ENCODE measurements at regions of chr16 and their contacts with region 1.

Region 1: GRCh38 chr16:11586856-11587642 is at the start of gene LITAF:
- DNase-seq: peak; percentile 50 to 65 (median 57)
- H3K4me3 ChIP-seq: peak within 1 kb of the TSS; percentile 78 to 82
- H3K4me3 Mint-ChIP-seq: peak within 1 kb of the TSS; percentile 90 to 97 (median 96)
- H3K27ac ChIP-seq: peak within 1 kb of the TSS; percentile 73
- H3K27ac Mint-ChIP-seq: peak within 1 kb of the TSS; percentile 89 to 98 (median 95)
- H3K4me1 ChIP-seq: peaks cover 47% of the 10 kb centered on the region
- H3K4me1 Mint-ChIP-seq: peaks cover 27 to 52% (median 41%) of the 10 kb centered on the region in 4 donors
- H3K27me3 ChIP-seq: no peaks in the 10 kb centered on the region
- H3K27me3 Mint-ChIP-seq: no peaks in the 10 kb centered on the region
- total RNA-seq, gene LITAF: 155 to 157 TPM

Region 2: DNA sequence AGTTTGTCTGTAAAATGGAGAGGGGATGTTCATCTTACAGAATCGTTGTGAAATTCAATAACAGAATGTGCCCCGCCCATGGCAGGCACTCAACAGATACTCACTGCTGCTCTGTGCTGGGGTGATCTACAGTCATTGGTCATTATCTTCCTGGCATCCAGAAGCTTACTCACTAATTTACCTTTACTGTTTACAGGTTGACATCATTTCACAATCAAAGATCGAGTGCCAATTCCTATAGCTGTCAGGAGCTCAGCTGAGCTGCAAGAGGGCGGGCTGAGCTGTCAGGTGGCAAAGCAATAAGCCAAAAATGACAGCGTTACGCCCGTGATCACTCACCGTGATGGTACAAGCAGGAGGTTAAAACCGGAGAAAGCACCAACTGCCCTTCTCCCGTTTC is 51.6 kb before region 1 on chr16:
- CTCF ChIA-PET with region 1: interaction called, 20 read pairs
- POLR2A ChIA-PET with region 1: interaction called, 7 read pairs
- intact Hi-C with region 1: loop called (anchors 1 kb)
- DNase-seq: no peak
- H3K4me3 ChIP-seq: no peak overlapping the region
- H3K4me3 Mint-ChIP-seq: no peak overlapping the region
- H3K27ac ChIP-seq: no peak overlapping the region
- H3K27ac Mint-ChIP-seq: no peak overlapping the region
- H3K4me1 ChIP-seq: no peaks in the 10 kb centered on the region
- H3K4me1 Mint-ChIP-seq: peaks cover 5 to 11% (median 10%) of the 10 kb centered on the region in 4 donors
- H3K27me3 ChIP-seq: no peaks in the 10 kb centered on the region
- H3K27me3 Mint-ChIP-seq: no peaks in the 10 kb centered on the region

Region 3: GRCh38 chr16:11576427-11577289 is 10.4 kb before region 1 on chr16:
- CTCF ChIA-PET with region 1: no interaction called
- POLR2A ChIA-PET with region 1: interaction called, 18 read pairs
- intact Hi-C with region 1: loop called (anchors 1 kb)
- DNase-seq: no peak
- H3K4me3 ChIP-seq: no peak overlapping the region
- H3K4me3 Mint-ChIP-seq: peak overlapping the region in 7 of 8 donors; percentile 0 to 62 (median 39)
- H3K27ac ChIP-seq: no peak overlapping the region
- H3K27ac Mint-ChIP-seq: peak overlapping the region; percentile 25 to 90 (median 77)
- H3K4me1 ChIP-seq: peaks cover 90% of the 10 kb centered on the region
- H3K4me1 Mint-ChIP-seq: peaks cover 49 to 86% (median 66%) of the 10 kb centered on the region in 4 donors
- H3K27me3 ChIP-seq: no peaks in the 10 kb centered on the region
- H3K27me3 Mint-ChIP-seq: no peaks in the 10 kb centered on the region

Region 4: DNA sequence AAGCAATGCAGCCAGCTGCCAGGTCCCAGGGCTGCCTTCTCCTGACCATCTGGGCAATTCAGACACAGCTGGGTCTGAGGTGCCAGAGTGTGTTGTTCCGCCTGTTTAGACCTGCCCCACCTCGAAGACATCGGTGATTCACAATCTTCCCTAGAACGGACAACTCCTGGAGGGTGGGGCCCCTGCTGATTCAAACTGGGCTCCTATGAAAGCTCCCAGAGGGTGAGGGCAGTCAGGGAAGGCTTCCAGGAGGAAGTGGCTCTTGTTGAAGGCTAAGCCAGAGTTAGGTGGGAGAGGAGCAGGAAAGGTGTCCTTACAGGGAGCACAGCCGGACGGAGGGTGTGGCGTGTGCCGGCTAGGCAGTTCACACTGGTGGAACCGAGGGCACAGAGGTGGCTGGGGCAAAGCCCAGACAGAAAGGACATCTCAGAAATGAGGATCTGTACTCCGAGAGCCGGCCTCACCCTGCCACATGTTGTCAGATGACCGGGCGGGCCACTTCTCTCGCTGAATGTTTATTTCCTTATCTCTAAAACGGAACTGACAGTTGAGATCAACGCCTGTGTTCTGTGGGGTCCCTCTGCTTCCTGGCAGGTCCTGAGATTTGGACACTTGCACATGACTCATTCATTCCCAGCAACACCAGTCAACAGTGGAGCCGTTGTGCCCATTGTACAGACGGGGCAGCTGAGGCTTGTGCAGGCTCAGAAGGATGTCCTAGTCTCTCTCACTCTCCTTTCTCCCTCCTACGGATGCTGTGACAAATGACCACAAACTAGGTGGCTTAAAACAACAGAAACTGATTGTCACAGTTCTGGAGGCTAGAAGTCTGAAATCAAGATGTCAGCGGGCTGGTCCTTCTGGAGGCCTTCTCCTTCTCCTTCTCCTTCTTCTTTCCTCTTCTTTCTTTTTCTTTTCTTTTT is 26.6 kb after region 1 on chr16:
- CTCF ChIA-PET with region 1: interaction called, 4 read pairs
- POLR2A ChIA-PET with region 1: interaction called, 175 read pairs
- intact Hi-C with region 1: no loop called
- DNase-seq: no peak
- H3K4me3 ChIP-seq: no peak overlapping the region
- H3K4me3 Mint-ChIP-seq: peak overlapping the region in 6 of 8 donors; percentile 7 to 61 (median 20)
- H3K27ac ChIP-seq: no peak overlapping the region
- H3K27ac Mint-ChIP-seq: peak overlapping the region in 6 of 7 donors; percentile 22 to 81 (median 74)
- H3K4me1 ChIP-seq: peaks cover 24% of the 10 kb centered on the region
- H3K4me1 Mint-ChIP-seq: peaks cover 12 to 32% (median 22%) of the 10 kb centered on the region in 4 donors
- H3K27me3 ChIP-seq: no peaks in the 10 kb centered on the region
- H3K27me3 Mint-ChIP-seq: no peaks in the 10 kb centered on the region

Region 5: GRCh38 chr16:11667824-11668622 is 81.0 kb after region 1 on chr16 and contains the start of gene SNN:
- CTCF ChIA-PET with region 1: interaction called, 3 read pairs
- POLR2A ChIA-PET with region 1: interaction called, 10 read pairs
- intact Hi-C with region 1: no loop called
- DNase-seq: peak; percentile 81 to 85 (median 83)
- H3K4me3 ChIP-seq: peak within 1 kb of the TSS; percentile 47 to 72
- H3K4me3 Mint-ChIP-seq: peak within 1 kb of the TSS; percentile 84 to 92 (median 87)
- H3K27ac ChIP-seq: peak within 1 kb of the TSS; percentile 47
- H3K27ac Mint-ChIP-seq: peak within 1 kb of the TSS; percentile 65 to 95 (median 87)
- H3K4me1 ChIP-seq: peaks cover 74% of the 10 kb centered on the region
- H3K4me1 Mint-ChIP-seq: peaks cover 51 to 80% (median 60%) of the 10 kb centered on the region in 4 donors
- H3K27me3 ChIP-seq: no peaks in the 10 kb centered on the region
- H3K27me3 Mint-ChIP-seq: no peaks in the 10 kb centered on the region
- total RNA-seq, gene SNN: 19.2 to 20.4 TPM

Measured in CD4-positive, alpha-beta memory T cell (primary cell).